B cell (primary cell): ENCODE measurements at regions of chr15 and their contacts with region 1.

Region 1: DNA sequence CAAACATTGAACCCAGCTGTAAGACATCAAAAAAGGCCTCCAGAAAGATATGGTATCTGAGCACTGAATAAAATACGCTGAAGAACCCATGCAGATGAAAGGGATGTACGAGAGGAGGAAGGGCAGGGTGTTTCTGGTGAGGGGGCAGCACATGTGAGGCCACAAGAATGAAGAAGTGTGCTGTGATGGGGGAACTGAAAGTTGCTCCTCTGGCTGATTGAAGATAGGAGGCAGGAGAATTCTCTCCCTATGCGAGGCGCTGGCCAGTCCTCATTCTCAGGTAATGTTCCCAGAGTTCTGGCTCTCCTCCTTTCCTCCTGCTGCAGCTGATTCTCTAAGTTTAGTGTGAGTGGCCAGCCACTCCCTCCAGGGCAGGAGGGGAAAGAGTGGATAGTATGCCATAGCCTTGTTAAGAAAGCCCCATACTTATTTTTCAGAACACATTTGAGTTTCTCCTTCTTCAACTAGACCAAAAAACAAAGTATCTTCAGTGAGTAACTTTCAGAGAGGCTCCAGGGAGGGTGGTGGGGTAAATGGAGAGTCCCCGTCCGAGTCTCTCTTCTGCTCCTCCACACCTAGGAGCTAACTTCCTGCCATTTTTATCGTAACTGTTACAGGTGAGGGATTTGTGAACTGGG is 26.9 kb upstream of the MYO1E start:
- DNase-seq: peak; percentile 89
- ATAC-seq: peak; percentile 95
- H3K4me3 ChIP-seq: peak overlapping the region; percentile 21 to 48 (median 35)
- H3K4me3 Mint-ChIP-seq: peak overlapping the region; percentile 80
- H3K27ac ChIP-seq: peak overlapping the region; percentile 70 to 89
- H3K27ac Mint-ChIP-seq: peak overlapping the region; percentile 93
- H3K4me1 ChIP-seq: peaks cover 73 to 81% of the 10 kb centered on the region in 2 donors
- H3K4me1 Mint-ChIP-seq: peaks cover 78% of the 10 kb centered on the region
- H3K27me3 ChIP-seq: no peaks in the 10 kb centered on the region
- H3K27me3 Mint-ChIP-seq: no peaks in the 10 kb centered on the region
- CTCF ChIP-seq: no peak

Region 2: GRCh38 chr15:59349680-59350420 is 49.7 kb before region 1 on chr15:
- CTCF ChIA-PET with region 1: no interaction called
- POLR2A ChIA-PET with region 1: no interaction called
- intact Hi-C with region 1: loop called (anchors 5 kb)
- DNase-seq: no peak
- ATAC-seq: no peak
- H3K4me3 ChIP-seq: no peak overlapping the region
- H3K4me3 Mint-ChIP-seq: no peak overlapping the region
- H3K27ac ChIP-seq: peak overlapping the region in 1 of 2 donors; percentile 49
- H3K27ac Mint-ChIP-seq: peak overlapping the region; percentile 43
- H3K4me1 ChIP-seq: peaks cover 65 to 69% of the 10 kb centered on the region in 2 donors
- H3K4me1 Mint-ChIP-seq: peaks cover 77% of the 10 kb centered on the region
- H3K27me3 ChIP-seq: no peaks in the 10 kb centered on the region
- H3K27me3 Mint-ChIP-seq: no peaks in the 10 kb centered on the region
- CTCF ChIP-seq: no peak